Activated CD4-positive, alpha-beta T cell treated with anti-CD3 and anti-CD28 coated beads, Interleukin-2, amount 10 ng/mL, durations not matched to agents 24 days and 14 days (primary cell): ENCODE measurements at regions of chr4 and their contacts with region 1.

Region 1: GRCh38 chr4:25938787-25939186 is 24.8 kb downstream of the SMIM20 start:
- DNase-seq: peak; percentile 65
- H3K4me3 Mint-ChIP-seq: peak overlapping the region; percentile 20
- H3K27ac Mint-ChIP-seq: peak overlapping the region; percentile 89
- H3K4me1 Mint-ChIP-seq: peaks cover 26% of the 10 kb centered on the region
- H3K27me3 Mint-ChIP-seq: peaks cover 5% of the 10 kb centered on the region

Region 2: GRCh38 chr4:25862411-25863346 is 76.1 kb before region 1 on chr4 and contains the start of gene SEL1L3:
- intact Hi-C with region 1: loop called (anchors 2 kb)
- DNase-seq: peak; percentile 86
- H3K4me3 Mint-ChIP-seq: peak within 1 kb of the TSS; percentile 99
- H3K27ac Mint-ChIP-seq: peak within 1 kb of the TSS; percentile 100
- H3K4me1 Mint-ChIP-seq: peaks cover 30% of the 10 kb centered on the region
- H3K27me3 Mint-ChIP-seq: peaks cover 2% of the 10 kb centered on the region
- total RNA-seq, gene SEL1L3: 33.9 and 35.3 TPM in 2 replicates

Region 3: GRCh38 chr4:25913851-25914669 is 24.7 kb before region 1 on chr4 and contains the start of gene SMIM20:
- intact Hi-C with region 1: loop called (anchors 1 kb)
- DNase-seq: peak; percentile 96
- H3K4me3 Mint-ChIP-seq: peak within 1 kb of the TSS; percentile 96
- H3K27ac Mint-ChIP-seq: peak within 1 kb of the TSS; percentile 99
- H3K4me1 Mint-ChIP-seq: peaks cover 17% of the 10 kb centered on the region
- H3K27me3 Mint-ChIP-seq: peaks cover 9% of the 10 kb centered on the region
- total RNA-seq, gene SMIM20: 17.0 and 18.9 TPM in 2 replicates

Region 4: DNA sequence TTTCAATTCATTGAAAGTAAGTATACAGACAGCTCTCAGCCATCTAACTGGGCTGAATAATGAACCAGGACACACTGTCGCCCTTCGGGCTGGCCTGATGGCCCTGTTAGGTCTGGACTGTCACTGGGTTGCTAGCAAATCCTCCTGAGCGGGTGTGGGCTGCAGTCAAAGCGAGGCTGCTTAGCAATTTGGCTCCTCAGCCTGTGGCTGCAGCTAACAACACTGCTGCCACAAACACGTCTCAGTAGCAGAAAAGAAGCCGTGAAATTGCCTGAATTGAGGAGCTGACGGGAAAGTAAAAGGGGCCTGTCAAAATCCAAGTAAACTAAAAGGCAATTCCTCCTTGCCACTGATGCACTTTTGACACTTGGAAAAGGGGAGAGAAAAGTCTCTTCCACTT is 48.0 kb after region 1 on chr4:
- intact Hi-C with region 1: loop called (anchors 5 kb)
- DNase-seq: no peak
- H3K4me3 Mint-ChIP-seq: no peak overlapping the region
- H3K27ac Mint-ChIP-seq: no peak overlapping the region
- H3K4me1 Mint-ChIP-seq: peaks cover 4% of the 10 kb centered on the region
- H3K27me3 Mint-ChIP-seq: peaks cover 2% of the 10 kb centered on the region

Region 5: DNA sequence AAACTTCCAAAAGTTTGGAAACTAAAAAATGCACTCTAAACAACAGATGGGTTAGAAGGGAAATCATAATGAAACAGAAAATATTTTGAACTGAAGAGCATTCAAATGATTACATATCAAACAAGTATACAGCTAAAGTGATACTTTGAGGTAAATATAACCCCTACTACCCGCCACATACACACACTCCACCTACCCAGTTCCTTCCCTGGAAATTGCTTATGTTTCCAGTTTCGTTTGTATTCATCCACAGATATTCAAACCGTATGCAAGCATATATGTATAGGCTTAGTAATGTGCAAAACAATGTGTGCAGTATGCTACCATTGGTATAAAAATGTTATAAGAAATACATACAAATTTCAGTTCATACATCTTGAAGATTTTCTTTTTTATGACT is 70.7 kb after region 1 on chr4:
- intact Hi-C with region 1: loop called (anchors 2 kb)
- DNase-seq: no peak
- H3K4me3 Mint-ChIP-seq: no peak overlapping the region
- H3K27ac Mint-ChIP-seq: no peak overlapping the region
- H3K4me1 Mint-ChIP-seq: peaks cover 10% of the 10 kb centered on the region
- H3K27me3 Mint-ChIP-seq: peaks cover 24% of the 10 kb centered on the region

Region 6: DNA sequence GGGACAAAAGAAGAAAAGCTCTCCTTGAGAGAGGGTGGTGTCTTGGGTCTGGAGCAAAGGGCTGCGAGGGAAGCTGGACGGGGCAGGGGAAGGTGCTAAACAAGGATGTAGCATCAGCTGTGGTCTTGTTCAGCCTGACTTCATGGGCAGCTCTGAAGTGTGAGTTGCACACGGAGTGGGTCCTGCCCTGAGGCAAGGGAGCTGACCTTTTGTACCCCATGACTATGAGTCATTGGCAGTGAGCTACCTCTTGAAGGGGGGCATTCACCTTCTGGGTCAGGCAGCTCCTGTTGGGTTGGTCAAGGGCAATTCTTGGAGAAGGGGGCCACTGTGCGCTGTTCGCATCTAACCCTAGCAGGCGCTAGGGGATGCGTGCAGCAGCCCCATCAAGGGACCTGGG is 127.0 kb after region 1 on chr4:
- intact Hi-C with region 1: no loop called
- DNase-seq: no peak
- H3K4me3 Mint-ChIP-seq: no peak overlapping the region
- H3K27ac Mint-ChIP-seq: no peak overlapping the region
- H3K4me1 Mint-ChIP-seq: peaks cover 12% of the 10 kb centered on the region
- H3K27me3 Mint-ChIP-seq: no peaks in the 10 kb centered on the region

Region 7: GRCh38 chr4:26746802-26747213 is 808.0 kb after region 1 on chr4:
- intact Hi-C with region 1: loop called (anchors 2 kb)
- DNase-seq: peak; percentile 69
- H3K4me3 Mint-ChIP-seq: no peak overlapping the region
- H3K27ac Mint-ChIP-seq: no peak overlapping the region
- H3K4me1 Mint-ChIP-seq: peaks cover 13% of the 10 kb centered on the region
- H3K27me3 Mint-ChIP-seq: peaks cover 17% of the 10 kb centered on the region